ENCODE measurements at regions of chr1 and their contacts with region 1.

Region 1: DNA sequence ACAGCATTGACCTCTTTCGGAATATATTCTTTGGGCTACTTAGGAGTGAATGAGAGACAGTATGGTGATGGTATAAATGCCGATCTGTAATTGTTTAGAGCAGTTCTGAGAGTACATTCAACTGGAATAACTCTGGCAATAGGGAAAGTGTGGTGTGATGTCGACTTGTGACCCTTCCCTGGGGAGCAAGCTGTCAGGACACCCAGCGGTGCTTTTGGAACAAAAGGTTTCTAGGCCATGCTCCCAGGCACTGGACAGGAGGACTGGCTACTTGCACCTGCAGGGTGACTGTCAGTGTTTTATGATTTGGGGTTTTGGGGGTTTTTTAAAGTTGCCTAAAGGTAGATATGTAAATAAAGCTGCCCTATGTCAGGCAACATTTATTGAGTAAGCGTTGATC is 50.9 kb downstream of the MACO1 start:
- DNase-seq: peak in 1 of 2 donors; percentile 34
- ATAC-seq: peak; percentile 50 to 58
- H3K4me3 ChIP-seq: no peak overlapping the region
- H3K27ac ChIP-seq: peak overlapping the region; percentile 57 to 83 (median 65)
- H3K4me1 ChIP-seq: peaks cover 67 to 77% of the 10 kb centered on the region in 2 donors
- H3K27me3 ChIP-seq: no peaks in the 10 kb centered on the region
- CTCF ChIP-seq: no peak
- POLR2A ChIP-seq: no peak

Region 2: DNA sequence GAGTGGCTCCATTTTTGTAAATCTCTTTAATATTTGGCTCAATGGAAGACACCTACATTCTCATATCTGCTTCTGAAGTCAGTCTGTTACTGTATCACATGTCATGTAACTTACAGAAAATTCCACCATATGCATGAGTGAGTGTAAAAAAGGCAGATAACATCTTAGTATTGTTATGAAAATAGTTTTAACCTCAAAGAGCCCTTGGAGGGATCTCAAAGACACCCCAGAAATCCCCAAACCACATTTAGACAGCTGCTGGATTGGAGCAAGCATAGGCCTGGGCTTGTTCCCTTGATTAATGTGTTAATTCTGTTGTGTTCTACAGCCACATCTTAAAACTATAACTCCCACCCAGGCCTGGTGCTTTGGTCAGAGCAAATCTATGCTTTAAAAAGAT is 34.1 kb before region 1 on chr1:
- in situ Hi-C with region 1: no loop called
- intact Hi-C with region 1: no loop called
- DNase-seq: no peak
- ATAC-seq: no peak
- H3K4me3 ChIP-seq: no peak overlapping the region
- H3K27ac ChIP-seq: no peak overlapping the region
- H3K4me1 ChIP-seq: peaks cover 37 to 51% of the 10 kb centered on the region in 2 donors
- H3K27me3 ChIP-seq: no peaks in the 10 kb centered on the region
- CTCF ChIP-seq: no peak
- POLR2A ChIP-seq: no peak

Region 3: GRCh38 chr1:25515033-25515432 is 33.4 kb after region 1 on chr1:
- in situ Hi-C with region 1: no loop called
- intact Hi-C with region 1: loop called (anchors 1 kb)
- DNase-seq: no peak
- ATAC-seq: no peak
- H3K4me3 ChIP-seq: no peak overlapping the region
- H3K27ac ChIP-seq: no peak overlapping the region
- H3K4me1 ChIP-seq: no peaks in the 10 kb centered on the region
- H3K27me3 ChIP-seq: no peaks in the 10 kb centered on the region
- CTCF ChIP-seq: no peak
- POLR2A ChIP-seq: no peak